CD4-positive, alpha-beta memory T cell (primary cell): ENCODE measurements at regions of chr11 and their contacts with region 1.

Region 1: DNA sequence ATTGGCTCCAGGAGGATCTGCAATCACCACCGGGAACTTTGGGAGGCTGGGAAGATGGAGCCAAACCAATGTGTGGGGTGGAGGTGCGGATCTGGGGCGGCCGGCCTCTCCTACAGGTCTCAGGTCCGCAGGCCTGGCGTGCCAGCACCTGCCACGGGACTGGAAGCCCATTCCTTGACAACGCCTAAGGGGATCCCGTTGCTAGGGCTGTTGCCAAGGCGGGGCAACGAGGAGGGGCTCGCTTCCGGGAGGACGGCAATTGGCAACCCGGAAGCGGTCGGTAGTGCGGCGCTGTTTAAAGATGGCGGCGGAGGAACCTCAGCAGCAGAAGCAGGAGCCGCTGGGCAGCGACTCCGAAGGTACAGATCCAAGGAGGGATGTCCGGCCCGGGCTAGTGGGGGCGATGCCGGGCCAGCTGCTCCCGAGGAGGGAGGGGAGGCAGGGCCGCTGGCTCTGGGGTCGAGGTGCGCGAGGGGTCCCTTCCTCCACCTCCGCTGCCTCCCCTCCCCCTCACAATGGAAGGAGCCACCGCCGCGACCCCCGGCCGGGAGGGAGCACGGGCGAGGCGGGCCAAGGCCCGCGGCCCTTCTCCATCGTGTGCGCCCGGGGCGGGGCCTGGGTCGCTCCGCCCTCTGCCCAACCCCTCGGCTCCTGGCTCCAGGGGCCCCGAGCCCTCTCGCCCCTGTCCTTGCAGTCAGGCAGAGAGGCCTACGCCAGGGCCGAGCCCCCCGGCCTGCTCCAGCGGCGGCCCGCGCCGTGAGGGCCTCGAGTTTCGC is at the start of gene OTUB1:
- DNase-seq: peak; percentile 82 to 90 (median 84)
- H3K4me3 ChIP-seq: peak within 1 kb of the TSS; percentile 82 to 96
- H3K4me3 Mint-ChIP-seq: peak within 1 kb of the TSS; percentile 94 to 99 (median 97)
- H3K27ac ChIP-seq: peak within 1 kb of the TSS; percentile 96
- H3K27ac Mint-ChIP-seq: peak within 1 kb of the TSS; percentile 97 to 99 (median 98)
- H3K4me1 ChIP-seq: peaks cover 25% of the 10 kb centered on the region
- H3K4me1 Mint-ChIP-seq: peaks cover 13 to 31% (median 23%) of the 10 kb centered on the region in 4 donors
- H3K27me3 ChIP-seq: no peaks in the 10 kb centered on the region
- H3K27me3 Mint-ChIP-seq: no peaks in the 10 kb centered on the region
- total RNA-seq, gene OTUB1: 72.9 to 73.0 TPM

Region 2: GRCh38 chr11:63974259-63975143 is 11.8 kb before region 1 on chr11 and contains the start of gene COX8A:
- CTCF ChIA-PET with region 1: no interaction called
- POLR2A ChIA-PET with region 1: interaction called, 51 read pairs
- intact Hi-C with region 1: loop called (anchors 1 kb)
- DNase-seq: peak; percentile 94 to 98 (median 96)
- H3K4me3 ChIP-seq: peak within 1 kb of the TSS; percentile 90 to 100
- H3K4me3 Mint-ChIP-seq: peak within 1 kb of the TSS; percentile 96 to 100 (median 100)
- H3K27ac ChIP-seq: peak within 1 kb of the TSS; percentile 95
- H3K27ac Mint-ChIP-seq: peak within 1 kb of the TSS; percentile 99 to 100 (median 99)
- H3K4me1 ChIP-seq: peaks cover 20% of the 10 kb centered on the region
- H3K4me1 Mint-ChIP-seq: peaks cover 17 to 40% (median 31%) of the 10 kb centered on the region in 4 donors
- H3K27me3 ChIP-seq: no peaks in the 10 kb centered on the region
- H3K27me3 Mint-ChIP-seq: peaks cover 2% of the 10 kb centered on the region in 2 donors
- total RNA-seq, gene COX8A: 113 to 130 TPM

Region 3: DNA sequence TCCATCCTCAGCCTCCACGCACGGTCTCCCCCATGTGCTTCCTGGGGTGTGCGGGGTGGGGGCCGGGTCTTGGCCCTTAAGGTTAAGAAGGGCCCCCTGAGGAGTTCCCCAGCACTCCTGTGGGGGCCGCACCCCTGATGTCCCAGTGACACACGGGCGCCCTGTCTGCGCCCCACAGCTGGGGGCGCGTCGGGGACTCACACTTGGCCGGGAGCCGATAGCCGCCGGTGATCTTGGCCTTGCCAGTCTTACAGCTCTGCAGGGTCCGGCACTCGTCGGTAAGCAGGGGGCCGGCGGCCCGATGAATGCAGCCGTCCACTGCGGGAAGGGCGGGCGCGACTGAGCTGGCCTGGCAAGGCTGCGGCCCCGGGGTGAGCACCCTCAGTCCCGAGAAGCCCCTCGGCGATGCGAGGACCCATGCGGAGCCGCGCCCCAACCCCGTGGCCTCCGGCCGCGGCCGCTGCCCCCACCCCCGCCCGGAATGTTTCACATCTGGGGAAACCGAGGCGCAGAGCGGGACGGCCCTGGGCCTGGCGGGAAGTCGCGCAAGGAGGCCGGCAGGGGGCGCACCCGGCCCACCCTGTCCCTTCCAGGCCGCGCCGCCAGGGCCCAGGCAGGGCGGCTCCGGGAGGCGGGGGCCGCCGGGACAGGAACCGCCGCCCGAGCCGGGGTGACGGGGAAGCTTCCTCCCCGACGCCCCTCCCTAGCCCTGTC is 13.8 kb after region 1 on chr11:
- CTCF ChIA-PET with region 1: interaction called, 20 read pairs
- POLR2A ChIA-PET with region 1: interaction called, 9 read pairs
- intact Hi-C with region 1: no loop called
- DNase-seq: peak; percentile 66 to 79 (median 76)
- H3K4me3 ChIP-seq: peak overlapping the region in 1 of 2 donors; percentile 28
- H3K4me3 Mint-ChIP-seq: peak overlapping the region in 6 of 8 donors; percentile 21 to 76 (median 50)
- H3K27ac ChIP-seq: no peak overlapping the region
- H3K27ac Mint-ChIP-seq: no peak overlapping the region
- H3K4me1 ChIP-seq: peaks cover 8% of the 10 kb centered on the region
- H3K4me1 Mint-ChIP-seq: peaks cover 0 to 5% (median 3%) of the 10 kb centered on the region in 4 donors
- H3K27me3 ChIP-seq: no peaks in the 10 kb centered on the region
- H3K27me3 Mint-ChIP-seq: no peaks in the 10 kb centered on the region